Posterior cingulate gyrus (tissue), 11 donors: ENCODE measurements at regions of chr15 and their contacts with region 1.

Region 1: GRCh38 chr15:43903864-43904290 is 77.1 kb downstream of the WDR76 start:
- DNase-seq: peak in 5 of 10 donors; percentile 23 to 59 (median 57)

Region 2: GRCh38 chr15:43800286-43801141 is 103.4 kb before region 1 on chr15 and contains the start of gene HYPK:
- intact Hi-C with region 1: no loop called
- DNase-seq: peak; percentile 88 to 99 (median 94)

Region 3: GRCh38 chr15:44066316-44066740 is 162.5 kb after region 1 on chr15:
- intact Hi-C with region 1: loop called (anchors 2 kb)
- DNase-seq: peak in 3 of 10 donors; percentile 28 to 69 (median 50)

Region 4: GRCh38 chr15:44137750-44138149 is 233.9 kb after region 1 on chr15:
- intact Hi-C with region 1: loop called (anchors 10 kb)
- DNase-seq: no peak

Region 5: DNA sequence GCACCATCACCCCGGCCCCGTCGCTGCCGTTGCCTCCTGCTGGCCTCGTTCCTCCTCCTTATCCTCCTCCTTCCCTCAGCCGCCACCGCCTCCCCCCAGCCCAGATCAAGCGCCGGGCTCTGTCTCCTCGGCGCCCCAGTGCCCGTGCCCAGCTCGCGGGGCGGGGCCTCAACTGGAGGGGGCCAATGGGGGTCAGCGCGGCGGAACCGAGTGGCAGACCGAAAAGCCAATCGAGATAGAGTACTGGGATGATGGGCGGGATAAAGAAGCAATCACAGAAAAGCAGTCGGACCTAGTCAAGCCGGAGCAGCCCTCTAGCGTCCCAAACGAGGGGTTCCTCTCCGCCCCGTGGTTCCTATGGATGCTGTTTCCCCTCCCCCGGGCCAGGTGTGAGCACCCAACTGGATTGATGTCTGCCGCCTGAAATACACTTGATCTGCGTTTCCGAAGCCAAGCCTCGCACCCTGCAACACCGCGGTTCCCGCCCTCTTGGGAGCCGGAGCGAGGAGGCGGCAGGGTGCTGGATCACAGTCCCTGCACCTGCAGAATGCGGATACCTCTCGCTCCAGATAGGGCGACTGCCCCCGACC is 291.4 kb after region 1 on chr15 and contains the start of gene FRMD5:
- intact Hi-C with region 1: loop called (anchors 5 kb)
- DNase-seq: peak; percentile 94 to 99 (median 96)

Region 6: GRCh38 chr15:44219073-44219472 is 315.2 kb after region 1 on chr15:
- intact Hi-C with region 1: loop called (anchors 2 kb)
- DNase-seq: no peak